BJ (cell line): ENCODE measurements at regions of chr6 and their contacts with region 1.

Region 1: DNA sequence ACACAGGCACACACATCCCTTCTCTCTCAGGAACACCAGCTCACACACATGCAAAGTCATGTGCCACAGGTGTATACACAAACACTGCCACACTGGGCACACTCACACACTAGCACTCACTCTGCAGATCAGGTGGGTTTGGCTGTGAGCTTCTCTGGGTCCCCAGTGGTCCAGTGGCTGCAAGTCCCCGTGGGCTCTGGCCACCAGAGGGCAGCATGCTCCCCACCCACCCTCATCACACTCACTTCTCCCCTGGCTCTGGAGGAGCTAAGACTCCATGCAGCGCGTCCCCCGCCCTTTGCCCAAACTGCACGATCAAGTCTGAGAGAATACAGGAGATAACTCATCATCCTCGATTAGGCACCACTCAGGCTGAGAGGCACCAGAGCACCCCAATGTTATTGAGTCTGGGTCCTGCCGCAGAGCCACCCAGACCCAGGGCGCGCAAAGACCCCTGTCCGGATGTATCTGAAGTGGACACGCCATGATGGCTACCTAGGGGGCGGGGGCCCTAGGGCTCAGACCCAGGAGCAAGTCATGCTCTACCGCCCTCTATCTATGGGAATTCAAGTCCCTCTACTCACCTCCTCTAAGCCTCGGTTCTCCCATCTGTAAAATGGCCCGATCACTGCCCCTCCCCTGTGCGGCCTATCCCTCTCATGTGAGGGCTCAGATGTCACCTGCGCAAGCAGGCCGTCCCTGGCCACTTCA is 90.5 kb downstream of the GRM4 start:
- DNase-seq: no peak
- H3K4me3 ChIP-seq: no peak overlapping the region
- H3K27me3 ChIP-seq: peaks cover 6% of the 10 kb centered on the region
- CTCF ChIP-seq: peak; percentile 84

Region 2: GRCh38 chr6:34161857-34162515 is 106.6 kb after region 1 on chr6:
- CTCF ChIA-PET with region 1: interaction called, 57 read pairs
- POLR2A ChIA-PET with region 1: no interaction called
- DNase-seq: no peak
- H3K4me3 ChIP-seq: no peak overlapping the region
- H3K27me3 ChIP-seq: no peaks in the 10 kb centered on the region; the same call in 1 of the 2 replicates
- CTCF ChIP-seq: no peak

Region 3: GRCh38 chr6:34284563-34285447 is 229.4 kb after region 1 on chr6:
- CTCF ChIA-PET with region 1: no interaction called
- POLR2A ChIA-PET with region 1: no interaction called
- DNase-seq: peak; percentile 35
- H3K4me3 ChIP-seq: no peak overlapping the region
- H3K27me3 ChIP-seq: no peaks in the 10 kb centered on the region
- CTCF ChIP-seq: no peak